Activated CD4-positive, alpha-beta T cell treated with anti-CD3 and anti-CD28 coated beads for 36 hours (primary cell): ENCODE measurements at regions of chr10 and their contacts with region 1.

Region 1: DNA sequence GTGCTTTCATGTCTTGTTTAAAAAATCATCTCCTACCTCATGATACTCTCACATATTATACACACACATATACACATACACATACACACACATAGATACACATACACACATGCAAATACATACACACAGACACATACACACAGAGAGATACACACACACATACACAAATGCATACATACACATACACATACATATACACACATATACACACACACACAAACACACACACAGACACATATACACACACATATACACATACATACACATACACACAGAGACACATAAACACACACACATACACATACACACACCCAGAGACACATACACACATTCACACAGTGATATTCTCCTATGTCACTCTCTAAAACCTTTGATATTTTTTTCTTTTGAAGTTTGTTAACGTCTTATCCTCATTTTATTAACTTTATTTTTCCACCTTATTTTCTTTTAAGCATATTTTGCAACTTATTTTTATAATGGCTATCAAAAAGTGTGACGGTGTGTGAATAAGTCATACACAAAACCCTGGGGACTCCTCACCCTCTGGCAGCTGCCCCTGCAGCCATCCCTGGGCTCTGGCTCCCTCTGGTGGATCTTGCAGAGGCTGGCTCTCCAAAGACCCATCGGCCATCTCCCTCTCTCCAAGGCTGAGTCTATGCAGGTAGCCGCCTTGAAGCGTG is 3.9 kb upstream of the C10orf120 start:
- DNase-seq: peak; percentile 77
- ATAC-seq: no peak
- H3K4me3 Mint-ChIP-seq: no peak overlapping the region
- H3K27ac Mint-ChIP-seq: no peak overlapping the region
- H3K4me1 Mint-ChIP-seq: peaks cover 8% of the 10 kb centered on the region
- H3K27me3 Mint-ChIP-seq: peaks cover 4% of the 10 kb centered on the region

Region 2: GRCh38 chr10:122298598-122299301 is 404.8 kb before region 1 on chr10:
- CTCF ChIA-PET with region 1: interaction called, 4 read pairs
- POLR2A ChIA-PET with region 1: no interaction called
- intact Hi-C with region 1: loop called (anchors 1 to 5 kb)
- DNase-seq: peak; percentile 80
- ATAC-seq: peak; percentile 94
- H3K4me3 Mint-ChIP-seq: no peak overlapping the region
- H3K27ac Mint-ChIP-seq: no peak overlapping the region
- H3K4me1 Mint-ChIP-seq: peaks cover 5% of the 10 kb centered on the region
- H3K27me3 Mint-ChIP-seq: peaks cover 3% of the 10 kb centered on the region

Region 3: DNA sequence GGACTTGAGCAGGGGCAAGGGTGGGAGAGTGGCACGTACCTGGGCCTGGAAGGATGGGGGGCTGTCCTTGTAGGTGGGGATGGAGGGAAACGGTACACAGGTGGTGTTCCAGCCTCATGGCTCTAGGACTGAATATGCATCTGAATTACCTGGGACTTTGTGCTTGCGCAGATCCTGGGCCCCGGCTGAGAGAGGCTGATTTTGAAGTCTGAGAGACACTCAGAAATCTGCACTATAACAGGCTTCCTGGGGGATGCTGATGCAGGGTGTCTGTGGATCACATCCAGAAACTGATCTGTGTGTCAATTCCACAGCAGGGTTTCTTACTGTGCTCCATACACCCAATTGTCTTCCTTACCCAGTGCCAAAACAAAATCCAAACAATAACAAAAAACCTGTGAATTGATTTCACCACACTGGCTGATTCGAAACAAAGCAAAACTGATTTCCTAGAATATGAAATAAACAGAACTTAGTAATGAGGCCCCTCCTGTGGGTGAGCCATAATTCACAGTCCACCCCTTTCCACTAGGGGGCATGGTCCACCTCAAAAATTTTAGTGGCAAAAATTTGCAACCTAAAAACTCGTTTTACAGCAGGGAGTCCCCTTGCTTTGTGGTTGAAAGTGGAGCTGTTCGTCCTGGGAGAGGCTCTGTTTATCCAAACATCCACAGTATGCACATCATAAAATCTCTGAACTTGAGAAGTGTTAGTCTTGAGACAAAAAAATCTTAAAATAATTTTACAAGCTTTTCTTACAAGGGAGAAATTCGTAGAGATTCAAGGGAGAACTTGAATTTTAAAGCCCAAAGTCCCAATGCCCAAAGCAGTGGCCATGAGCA is 361.1 kb before region 1 on chr10:
- CTCF ChIA-PET with region 1: no interaction called
- POLR2A ChIA-PET with region 1: no interaction called
- intact Hi-C with region 1: loop called in 1 of 2 experiments (anchors 5 kb)
- DNase-seq: peak; percentile 73
- ATAC-seq: peak; percentile 82
- H3K4me3 Mint-ChIP-seq: no peak overlapping the region
- H3K27ac Mint-ChIP-seq: no peak overlapping the region
- H3K4me1 Mint-ChIP-seq: peaks cover 11% of the 10 kb centered on the region
- H3K27me3 Mint-ChIP-seq: peaks cover 4% of the 10 kb centered on the region

Region 4: GRCh38 chr10:122648599-122649428 is 54.8 kb before region 1 on chr10:
- CTCF ChIA-PET with region 1: interaction called, 7 read pairs
- POLR2A ChIA-PET with region 1: no interaction called
- intact Hi-C with region 1: loop called (anchors 1 to 5 kb)
- DNase-seq: peak; percentile 62
- ATAC-seq: peak; percentile 39
- H3K4me3 Mint-ChIP-seq: no peak overlapping the region
- H3K27ac Mint-ChIP-seq: no peak overlapping the region
- H3K4me1 Mint-ChIP-seq: no peaks in the 10 kb centered on the region
- H3K27me3 Mint-ChIP-seq: peaks cover 29% of the 10 kb centered on the region

Region 5: DNA sequence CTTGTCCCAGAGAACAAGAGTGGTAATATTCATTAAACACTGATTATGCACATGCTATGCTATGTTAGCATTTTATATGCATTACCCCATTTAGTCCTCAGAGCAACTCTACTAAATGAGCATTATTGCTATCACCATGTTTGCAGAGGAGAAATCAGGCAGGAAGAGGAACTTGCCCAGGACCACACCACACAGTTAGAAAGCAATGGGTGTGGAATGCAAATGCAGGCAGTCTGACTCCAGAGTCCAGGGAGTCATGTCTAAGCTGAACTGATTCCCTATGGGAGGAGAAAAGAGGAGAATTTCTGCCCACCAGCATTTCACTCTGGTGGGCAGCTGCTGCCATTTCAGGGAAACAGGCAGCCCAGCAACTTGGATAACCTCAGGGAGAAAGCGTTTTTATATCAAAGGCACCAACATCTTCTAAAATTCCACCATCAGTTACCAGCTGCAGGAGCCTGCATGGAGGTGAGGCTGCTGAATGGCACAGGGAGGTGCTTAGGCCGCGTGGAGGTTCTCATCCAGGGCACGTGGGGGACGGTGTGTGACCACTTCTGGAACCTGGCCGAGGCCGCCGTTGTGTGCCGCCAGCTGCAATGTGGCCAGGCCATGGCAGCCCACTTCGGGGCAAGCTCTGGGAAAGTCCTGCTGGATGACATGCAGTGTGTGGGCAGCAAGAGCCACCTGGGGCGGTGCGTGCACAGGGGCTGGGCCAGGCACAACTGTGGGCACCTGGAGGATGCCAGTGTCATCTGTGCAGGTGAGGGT is 64.2 kb after region 1 on chr10:
- CTCF ChIA-PET with region 1: no interaction called
- POLR2A ChIA-PET with region 1: no interaction called
- intact Hi-C with region 1: no loop called
- DNase-seq: no peak
- ATAC-seq: no peak
- H3K4me3 Mint-ChIP-seq: no peak overlapping the region
- H3K27ac Mint-ChIP-seq: no peak overlapping the region
- H3K4me1 Mint-ChIP-seq: no peaks in the 10 kb centered on the region
- H3K27me3 Mint-ChIP-seq: peaks cover 18% of the 10 kb centered on the region

Region 6: DNA sequence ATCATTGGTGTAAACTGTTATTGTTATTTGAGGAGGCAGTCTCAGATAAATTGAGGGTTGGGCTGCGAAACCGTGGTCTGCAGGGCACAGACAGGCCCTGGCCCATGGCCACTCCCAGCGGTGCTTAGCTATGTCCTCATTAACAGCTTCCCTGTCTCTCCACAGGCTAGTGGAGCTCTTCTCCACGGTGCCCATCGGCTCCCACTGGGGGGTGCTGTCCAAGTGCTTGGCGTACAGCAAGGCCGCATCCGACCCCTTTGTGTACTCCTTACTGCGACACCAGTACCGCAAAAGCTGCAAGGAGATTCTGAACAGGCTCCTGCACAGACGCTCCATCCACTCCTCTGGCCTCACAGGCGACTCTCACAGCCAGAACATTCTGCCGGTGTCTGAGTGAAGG is 984.2 kb after region 1 on chr10:
- CTCF ChIA-PET with region 1: no interaction called
- POLR2A ChIA-PET with region 1: no interaction called
- intact Hi-C with region 1: no loop called
- DNase-seq: no peak
- ATAC-seq: no peak
- H3K4me3 Mint-ChIP-seq: no peak overlapping the region
- H3K27ac Mint-ChIP-seq: no peak overlapping the region
- H3K4me1 Mint-ChIP-seq: no peaks in the 10 kb centered on the region
- H3K27me3 Mint-ChIP-seq: peaks cover 2% of the 10 kb centered on the region